ENCODE measurements at regions of chr1 and their contacts with region 1.

Region 1: GRCh38 chr1:202135221-202135721 is 9.3 kb downstream of the ARL8A start:
- DNase-seq: peak; percentile 30
- H3K4me3 ChIP-seq: no peak overlapping the region
- H3K27ac ChIP-seq: no peak overlapping the region
- H3K27me3 ChIP-seq: no peaks in the 10 kb centered on the region
- CTCF ChIP-seq: peak; percentile 85

Region 2: DNA sequence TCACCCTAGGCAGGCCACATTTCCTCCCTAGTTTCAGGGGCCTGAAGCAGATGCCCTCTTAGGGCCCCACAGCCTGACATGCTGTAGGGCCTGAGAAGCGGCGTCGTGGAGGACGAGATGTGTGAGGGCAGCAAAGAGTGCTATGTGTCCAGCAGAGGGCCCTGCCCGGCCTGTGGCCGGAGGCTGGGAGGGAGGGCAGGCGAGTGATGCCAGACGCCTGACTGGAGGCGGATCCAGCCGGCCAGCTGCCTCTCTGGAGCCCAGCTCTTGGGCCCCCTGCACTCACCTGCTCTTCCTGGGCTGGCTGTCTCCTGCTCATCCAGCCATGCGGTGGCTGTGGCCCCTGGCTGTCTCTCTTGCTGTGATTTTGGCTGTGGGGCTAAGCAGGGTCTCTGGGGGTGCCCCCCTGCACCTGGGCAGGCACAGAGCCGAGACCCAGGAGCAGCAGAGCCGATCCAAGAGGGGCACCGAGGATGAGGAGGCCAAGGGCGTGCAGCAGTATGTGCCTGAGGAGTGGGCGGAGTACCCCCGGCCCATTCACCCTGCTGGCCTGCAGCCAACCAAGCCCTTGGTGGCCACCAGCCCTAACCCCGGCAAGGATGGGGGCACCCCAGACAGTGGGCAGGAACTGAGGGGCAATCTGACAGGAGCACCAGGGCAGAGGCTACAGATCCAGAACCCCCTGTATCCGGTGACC is 12.5 kb before region 1 on chr1 and contains the start of gene GPR37L1:
- CTCF ChIA-PET with region 1: interaction called, 43 read pairs
- POLR2A ChIA-PET with region 1: no interaction called
- DNase-seq: no peak
- H3K4me3 ChIP-seq: no peak within 1 kb of the TSS
- H3K27ac ChIP-seq: no peak within 1 kb of the TSS
- H3K27me3 ChIP-seq: peaks cover 26% of the 10 kb centered on the region
- CTCF ChIP-seq: peak; percentile 57
- polyA plus RNA-seq, gene GPR37L1: not detected in 2 replicates

Region 3: GRCh38 chr1:202462342-202463076 is 327.2 kb after region 1 on chr1:
- CTCF ChIA-PET with region 1: no interaction called
- POLR2A ChIA-PET with region 1: no interaction called
- DNase-seq: no peak
- H3K4me3 ChIP-seq: no peak overlapping the region
- H3K27ac ChIP-seq: no peak overlapping the region
- H3K27me3 ChIP-seq: no peaks in the 10 kb centered on the region
- CTCF ChIP-seq: no peak

Measured in AG04450 (cell line).